ENCODE measurements at regions of chr2 and their contacts with region 1.

Region 1: DNA sequence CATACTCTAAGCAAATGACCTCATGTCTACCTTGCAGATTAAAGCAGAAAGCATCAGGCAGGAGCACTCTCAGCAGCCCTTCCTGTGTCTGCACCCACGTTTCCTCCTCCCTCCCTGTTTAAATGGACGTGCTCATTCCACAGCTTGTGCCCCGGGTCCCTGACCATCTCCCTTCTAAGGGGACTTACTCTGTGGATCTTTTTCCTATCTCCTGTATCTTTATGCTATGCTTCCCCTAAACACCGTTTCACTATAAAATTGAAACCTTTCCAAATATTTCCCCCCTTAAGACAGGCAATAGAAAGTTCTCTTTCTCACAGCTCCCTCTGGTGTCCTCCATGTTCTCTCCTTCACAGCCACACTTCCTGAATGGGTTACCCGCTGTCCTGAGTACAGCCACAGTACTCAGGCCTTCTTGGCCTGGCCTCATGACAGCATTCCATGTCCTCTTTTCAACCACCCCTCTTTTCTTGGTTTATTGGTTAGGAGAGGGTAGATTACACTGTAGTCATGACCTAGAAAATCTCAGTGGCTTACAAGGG is 41.1 kb downstream of the TMEM185B start:
- DNase-seq: no peak
- H3K4me3 ChIP-seq: no peak overlapping the region
- H3K27ac ChIP-seq: no peak overlapping the region
- H3K4me1 ChIP-seq: peaks cover 0 to 3% (median 0%) of the 10 kb centered on the region in 4 experiments; a peak in 1 of 7 replicates
- H3K27me3 ChIP-seq: no peaks in the 10 kb centered on the region
- CTCF ChIP-seq: no peak
- EP300 ChIP-seq: no peak
- POLR2A ChIP-seq: no peak
- RAD21 ChIP-seq: peak; percentile 17; a peak in 2 of 4 replicates

Region 2: DNA sequence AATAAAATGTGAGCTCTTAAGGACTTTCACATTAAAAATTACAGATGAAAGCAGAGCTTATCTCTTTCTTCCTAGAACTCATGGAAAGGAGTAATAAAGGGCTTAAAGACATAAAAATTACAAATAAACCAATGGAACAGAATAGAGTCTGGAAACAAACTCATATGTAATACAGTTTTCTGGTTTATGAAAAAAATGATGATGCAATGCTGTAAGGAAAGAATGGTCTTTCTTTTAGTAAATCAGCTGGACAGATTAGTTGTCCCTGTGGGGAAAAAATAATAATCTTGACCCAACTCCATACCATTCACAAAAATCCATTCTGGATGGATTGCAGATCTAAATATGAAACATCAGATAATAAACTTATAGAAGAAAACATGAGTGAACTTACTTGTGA is 13.1 kb before region 1 on chr2:
- CTCF ChIA-PET with region 1: interaction called, 20 read pairs
- POLR2A ChIA-PET with region 1: no interaction called
- DNase-seq: no peak
- H3K4me3 ChIP-seq: no peak overlapping the region
- H3K27ac ChIP-seq: no peak overlapping the region
- H3K4me1 ChIP-seq: no peaks in the 10 kb centered on the region
- H3K27me3 ChIP-seq: no peaks in the 10 kb centered on the region
- CTCF ChIP-seq: no peak
- EP300 ChIP-seq: no peak
- POLR2A ChIP-seq: no peak
- RAD21 ChIP-seq: no peak

Measured in H1 (cell line).